ENCODE measurements at regions of chr17 and their contacts with region 1.

Region 1: DNA sequence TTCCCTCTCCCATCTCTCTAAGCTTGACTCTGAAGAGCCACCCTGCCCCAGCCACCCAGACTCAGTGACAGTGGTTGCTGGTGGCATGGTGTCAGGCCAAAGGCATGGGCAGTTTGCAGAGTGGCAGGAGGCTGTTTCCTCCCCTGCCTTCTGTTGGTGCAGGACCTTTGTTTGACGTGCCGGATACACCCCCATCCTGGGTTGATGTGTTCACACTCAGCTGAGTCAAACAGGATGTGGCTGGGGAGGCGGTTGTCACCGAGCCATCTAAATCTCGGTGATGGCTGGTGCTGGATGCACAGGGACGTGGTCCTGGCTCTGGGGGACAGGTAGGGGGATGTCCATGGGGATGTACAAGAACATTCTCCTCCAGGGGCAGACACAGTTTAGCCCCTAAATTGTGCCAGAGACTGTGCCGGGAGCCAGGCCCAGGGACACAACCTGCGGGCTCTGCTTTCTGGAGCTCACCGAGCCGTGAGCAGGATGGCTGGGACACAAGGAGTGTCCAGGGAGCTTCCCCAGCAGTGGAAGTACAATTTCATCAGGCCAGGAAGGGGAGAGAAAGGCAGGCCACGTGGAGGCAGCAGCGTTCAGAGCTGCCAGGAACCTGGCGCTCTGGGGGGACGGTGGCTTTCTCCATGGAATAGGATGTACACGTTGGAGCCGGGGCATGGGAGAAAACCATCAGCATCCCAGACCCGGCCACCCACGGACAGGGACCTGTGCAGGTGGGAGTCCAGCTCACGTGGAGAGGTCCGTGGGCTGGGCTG is 264.2 kb downstream of the SEC14L1 start:
- DNase-seq: peak; percentile 96
- ATAC-seq: peak; percentile 84
- H3K4me3 Mint-ChIP-seq: peak overlapping the region; percentile 84
- H3K27ac Mint-ChIP-seq: peak overlapping the region; percentile 91
- H3K4me1 Mint-ChIP-seq: peaks cover 90% of the 10 kb centered on the region
- H3K27me3 Mint-ChIP-seq: no peaks in the 10 kb centered on the region

Region 2: GRCh38 chr17:77372444-77373298 is 32.3 kb before region 1 on chr17:
- CTCF ChIA-PET with region 1: interaction called, 28 read pairs
- DNase-seq: peak; percentile 82
- ATAC-seq: peak; percentile 57
- H3K4me3 Mint-ChIP-seq: peak overlapping the region; percentile 66
- H3K27ac Mint-ChIP-seq: peak overlapping the region; percentile 73
- H3K4me1 Mint-ChIP-seq: peaks cover 44% of the 10 kb centered on the region
- H3K27me3 Mint-ChIP-seq: no peaks in the 10 kb centered on the region

Region 3: GRCh38 chr17:77391668-77392375 is 13.2 kb before region 1 on chr17:
- CTCF ChIA-PET with region 1: interaction called, 53 read pairs
- DNase-seq: peak; percentile 81
- ATAC-seq: peak; percentile 37
- H3K4me3 Mint-ChIP-seq: peak overlapping the region; percentile 42
- H3K27ac Mint-ChIP-seq: peak overlapping the region; percentile 82
- H3K4me1 Mint-ChIP-seq: peaks cover 72% of the 10 kb centered on the region
- H3K27me3 Mint-ChIP-seq: no peaks in the 10 kb centered on the region

Region 4: GRCh38 chr17:77429919-77430752 is 25.1 kb after region 1 on chr17:
- CTCF ChIA-PET with region 1: interaction called, 43 read pairs
- DNase-seq: peak; percentile 89
- ATAC-seq: peak; percentile 50
- H3K4me3 Mint-ChIP-seq: no peak overlapping the region
- H3K27ac Mint-ChIP-seq: no peak overlapping the region
- H3K4me1 Mint-ChIP-seq: peaks cover 68% of the 10 kb centered on the region
- H3K27me3 Mint-ChIP-seq: no peaks in the 10 kb centered on the region

Region 5: DNA sequence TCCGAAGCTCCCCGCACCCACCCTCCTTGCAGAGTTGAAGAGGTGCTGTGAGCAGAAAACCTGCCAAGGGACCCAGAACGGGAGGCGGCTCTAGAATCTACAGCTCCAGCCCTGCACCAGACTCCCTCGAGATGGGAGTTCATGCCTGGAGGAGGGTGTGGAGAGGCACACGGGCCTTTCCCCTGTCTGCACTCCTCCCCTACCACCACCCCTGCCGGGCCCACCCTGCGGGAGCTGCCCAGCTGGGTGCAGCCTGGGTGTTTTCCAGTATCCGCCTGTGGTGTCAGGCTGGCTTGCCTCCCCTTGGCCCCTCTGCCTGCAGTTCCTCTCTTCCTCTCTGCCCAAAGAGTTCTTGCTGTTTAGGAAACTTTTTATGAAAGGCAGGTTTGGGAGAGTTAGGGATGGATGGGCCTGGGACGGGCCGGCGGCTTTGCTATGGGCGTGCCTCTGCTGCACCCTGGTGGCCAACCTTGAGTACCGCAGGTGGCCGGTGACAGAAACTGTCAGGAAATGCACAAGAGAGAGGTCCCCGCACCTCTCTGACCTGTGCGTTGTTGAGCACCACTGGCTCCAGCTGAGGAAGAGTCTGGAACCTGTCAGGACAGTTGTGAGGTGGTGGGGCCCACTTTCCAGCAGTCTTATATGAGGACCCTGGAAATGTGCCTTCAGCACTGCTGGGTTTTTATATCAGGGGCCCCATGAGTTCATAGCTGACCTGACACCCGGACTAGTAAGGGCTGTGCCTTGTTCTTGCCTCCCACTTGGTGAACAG is 89.9 kb after region 1 on chr17:
- CTCF ChIA-PET with region 1: interaction called, 46 read pairs
- DNase-seq: peak; percentile 77
- ATAC-seq: peak; percentile 74
- H3K4me3 Mint-ChIP-seq: no peak overlapping the region
- H3K27ac Mint-ChIP-seq: peak overlapping the region; percentile 58
- H3K4me1 Mint-ChIP-seq: peaks cover 21% of the 10 kb centered on the region
- H3K27me3 Mint-ChIP-seq: no peaks in the 10 kb centered on the region